ENCODE measurements at regions of chr14 and their contacts with region 1.

Region 1: GRCh38 chr14:90795746-90796145 is 20.5 kb downstream of the TTC7B start:
- DNase-seq: no peak
- H3K4me3 ChIP-seq: no peak overlapping the region
- H3K27ac ChIP-seq: no peak overlapping the region
- H3K4me1 ChIP-seq: peaks cover 0 to 37% (median 28%) of the 10 kb centered on the region in 4 experiments
- H3K27me3 ChIP-seq: no peaks in the 10 kb centered on the region

Region 2: GRCh38 chr14:90608929-90609341 is 186.8 kb before region 1 on chr14:
- CTCF ChIA-PET with region 1: no interaction called
- POLR2A ChIA-PET with region 1: no interaction called
- DNase-seq: no peak
- H3K4me3 ChIP-seq: no peak overlapping the region
- H3K27ac ChIP-seq: no peak overlapping the region
- H3K4me1 ChIP-seq: peaks cover 0 to 6% (median under 1%) of the 10 kb centered on the region in 4 experiments
- H3K27me3 ChIP-seq: no peaks in the 10 kb centered on the region

Region 3: DNA sequence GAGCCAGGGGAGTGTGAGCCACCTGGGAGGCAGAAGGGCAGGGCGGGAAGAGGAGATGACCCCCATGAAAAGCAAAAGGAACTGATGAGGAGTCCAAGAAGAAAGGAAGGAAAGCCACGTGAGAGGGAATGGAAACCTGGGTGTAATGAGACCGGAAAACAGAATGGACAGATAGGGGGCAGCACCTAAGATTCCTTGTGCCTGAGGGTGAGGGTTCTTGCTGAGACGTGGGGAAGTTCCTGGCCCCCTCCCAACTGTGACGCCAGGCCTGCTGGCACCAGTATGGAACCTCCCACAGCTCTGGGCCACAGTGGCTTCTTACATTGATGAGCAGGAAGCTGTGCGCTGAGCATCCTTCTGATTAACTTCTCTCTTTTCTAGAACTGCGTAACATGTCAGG is 10.3 kb before region 1 on chr14:
- CTCF ChIA-PET with region 1: interaction called, 32 read pairs
- POLR2A ChIA-PET with region 1: interaction called, 3 read pairs
- DNase-seq: peak; percentile 78 to 91 (median 80)
- H3K4me3 ChIP-seq: no peak overlapping the region
- H3K27ac ChIP-seq: no peak overlapping the region
- H3K4me1 ChIP-seq: peaks cover 0 to 3% (median 0%) of the 10 kb centered on the region in 4 experiments
- H3K27me3 ChIP-seq: no peaks in the 10 kb centered on the region

Region 4: DNA sequence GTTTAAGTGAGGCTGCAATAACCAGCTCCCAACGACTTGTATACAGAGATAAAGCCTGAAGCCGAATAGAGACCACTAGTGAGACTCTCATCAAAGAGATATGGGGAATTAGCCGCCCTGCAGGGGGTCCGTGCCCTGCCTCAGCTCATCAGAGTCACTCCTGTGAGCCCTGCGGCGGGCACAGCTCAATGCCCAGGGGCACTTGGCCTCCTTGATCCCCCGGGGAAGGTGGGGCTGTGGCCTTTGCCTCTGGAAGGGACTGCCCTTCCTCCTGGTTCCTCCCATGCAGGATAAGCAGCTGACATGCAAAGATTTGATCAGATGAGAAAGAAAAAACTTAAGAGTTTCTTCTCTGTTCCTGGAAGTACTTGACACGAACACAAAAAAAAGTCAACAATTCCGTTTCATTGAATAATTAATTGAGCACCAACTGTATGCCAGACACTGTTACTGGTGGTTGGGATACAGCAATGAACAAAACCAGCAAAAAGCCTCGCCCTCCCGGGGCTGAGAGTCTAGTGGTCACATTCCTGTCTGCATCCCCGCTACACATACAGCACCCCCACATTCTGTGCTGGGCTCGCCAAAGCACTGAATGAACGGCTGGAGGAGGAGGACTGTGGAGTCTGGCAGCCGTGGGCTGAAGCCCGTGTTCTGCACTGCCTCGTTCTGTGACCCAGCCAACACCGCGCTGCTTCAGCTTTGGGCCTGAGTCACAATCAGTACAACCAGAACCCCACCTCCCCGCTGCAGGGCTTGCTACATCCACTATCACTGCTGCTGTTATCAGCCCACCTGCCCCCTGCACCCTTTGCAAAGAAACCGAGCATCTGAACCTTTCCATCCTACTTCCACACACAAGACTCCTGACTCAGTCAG is 10.2 kb after region 1 on chr14:
- CTCF ChIA-PET with region 1: interaction called, 14 read pairs
- POLR2A ChIA-PET with region 1: no interaction called
- DNase-seq: peak in 1 of 3 donors; percentile 36
- H3K4me3 ChIP-seq: no peak overlapping the region
- H3K27ac ChIP-seq: no peak overlapping the region
- H3K4me1 ChIP-seq: peaks cover 0 to 86% (median 68%) of the 10 kb centered on the region in 4 experiments
- H3K27me3 ChIP-seq: no peaks in the 10 kb centered on the region

Region 5: GRCh38 chr14:90815822-90816700 is 20.3 kb after region 1 on chr14 and contains the start of gene TTC7B:
- CTCF ChIA-PET with region 1: interaction called, 21 read pairs
- POLR2A ChIA-PET with region 1: interaction called, 3 read pairs
- DNase-seq: peak in 1 of 3 donors; percentile 47
- H3K4me3 ChIP-seq: peak within 1 kb of the TSS; percentile 53 to 87 (median 75)
- H3K27ac ChIP-seq: peak within 1 kb of the TSS in 1 of 2 experiments; percentile 67
- H3K4me1 ChIP-seq: peaks cover 0 to 45% (median 33%) of the 10 kb centered on the region in 4 experiments
- H3K27me3 ChIP-seq: no peaks in the 10 kb centered on the region